Activated CD4-positive, alpha-beta memory T cell treated with anti-CD3 and anti-CD28 coated beads for 36 hours (primary cell): ENCODE measurements at regions of chr9 and their contacts with region 1.

Region 1: DNA sequence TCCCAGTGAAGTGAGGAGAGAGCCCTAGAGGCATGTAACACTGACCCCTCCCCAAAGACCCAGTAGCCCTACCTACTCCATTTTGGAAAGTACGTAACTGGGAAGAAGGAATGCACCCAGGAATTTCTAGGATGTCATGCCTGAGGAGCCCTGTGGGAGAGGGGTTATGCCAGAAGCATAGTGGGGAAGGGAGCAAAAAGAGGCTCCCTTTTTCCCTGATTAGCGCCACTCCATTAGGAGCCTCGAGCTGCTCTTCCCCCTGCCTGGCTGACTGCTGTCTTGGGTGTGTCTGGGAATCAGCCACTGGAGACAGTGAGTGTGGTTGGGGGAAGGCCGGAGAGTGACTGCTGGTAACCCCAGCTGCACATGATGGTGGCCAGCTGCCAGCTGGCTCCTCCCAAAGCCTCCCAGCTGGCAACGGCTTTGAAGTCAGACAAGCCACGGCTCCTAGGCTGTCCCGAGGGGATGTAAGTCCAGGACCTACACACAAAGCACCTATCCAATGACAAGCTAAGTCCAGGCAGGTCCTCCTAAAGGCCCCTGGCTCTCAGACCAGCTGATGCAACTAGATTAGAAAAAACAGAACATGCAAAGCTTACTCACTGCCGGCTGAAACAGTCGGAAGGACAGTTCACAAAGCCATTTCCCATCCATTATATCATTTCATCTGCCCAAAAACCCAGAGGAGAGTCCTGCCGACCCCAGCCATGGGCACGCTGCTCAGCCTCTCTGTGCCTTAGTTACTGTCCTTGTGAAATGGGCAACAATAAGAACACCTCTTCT is 136.6 kb upstream of the ABCA1 start:
- DNase-seq: no peak
- H3K4me3 Mint-ChIP-seq: no peak overlapping the region
- H3K27ac Mint-ChIP-seq: no peak overlapping the region
- H3K4me1 Mint-ChIP-seq: peaks cover 13% of the 10 kb centered on the region
- H3K27me3 Mint-ChIP-seq: peaks cover 6% of the 10 kb centered on the region

Region 2: GRCh38 chr9:105007143-105007542 is 57.4 kb before region 1 on chr9:
- CTCF ChIA-PET with region 1: no interaction called
- POLR2A ChIA-PET with region 1: no interaction called
- intact Hi-C with region 1: loop called (anchors 1 kb)
- DNase-seq: peak; percentile 41
- H3K4me3 Mint-ChIP-seq: no peak overlapping the region
- H3K27ac Mint-ChIP-seq: no peak overlapping the region
- H3K4me1 Mint-ChIP-seq: peaks cover 8% of the 10 kb centered on the region
- H3K27me3 Mint-ChIP-seq: peaks cover 1% of the 10 kb centered on the region

Region 3: DNA sequence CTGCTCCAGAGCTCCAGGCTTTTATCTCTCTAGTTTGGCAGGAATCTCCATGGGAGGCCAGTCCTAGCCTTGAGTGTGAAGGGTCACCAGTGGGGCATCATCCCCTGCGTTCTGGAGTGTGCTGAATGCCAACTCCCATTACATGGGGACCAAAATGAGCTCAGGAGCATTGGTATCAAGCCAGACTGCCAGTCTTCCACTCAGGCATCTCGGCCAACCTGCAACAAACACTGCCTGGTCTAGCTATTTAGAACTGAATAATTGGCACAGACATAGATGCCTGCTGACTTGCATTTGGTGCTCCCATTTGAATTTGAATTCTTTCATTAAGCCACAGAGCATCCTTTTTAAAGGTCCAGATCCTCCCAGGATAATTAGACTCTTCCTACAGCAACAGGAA is 20.0 kb before region 1 on chr9:
- CTCF ChIA-PET with region 1: no interaction called
- POLR2A ChIA-PET with region 1: no interaction called
- intact Hi-C with region 1: no loop called
- DNase-seq: no peak
- H3K4me3 Mint-ChIP-seq: no peak overlapping the region
- H3K27ac Mint-ChIP-seq: no peak overlapping the region
- H3K4me1 Mint-ChIP-seq: no peaks in the 10 kb centered on the region
- H3K27me3 Mint-ChIP-seq: peaks cover 2% of the 10 kb centered on the region